IMR-90 (cell line): ENCODE measurements at regions of chr3 and their contacts with region 1.

Region 1: DNA sequence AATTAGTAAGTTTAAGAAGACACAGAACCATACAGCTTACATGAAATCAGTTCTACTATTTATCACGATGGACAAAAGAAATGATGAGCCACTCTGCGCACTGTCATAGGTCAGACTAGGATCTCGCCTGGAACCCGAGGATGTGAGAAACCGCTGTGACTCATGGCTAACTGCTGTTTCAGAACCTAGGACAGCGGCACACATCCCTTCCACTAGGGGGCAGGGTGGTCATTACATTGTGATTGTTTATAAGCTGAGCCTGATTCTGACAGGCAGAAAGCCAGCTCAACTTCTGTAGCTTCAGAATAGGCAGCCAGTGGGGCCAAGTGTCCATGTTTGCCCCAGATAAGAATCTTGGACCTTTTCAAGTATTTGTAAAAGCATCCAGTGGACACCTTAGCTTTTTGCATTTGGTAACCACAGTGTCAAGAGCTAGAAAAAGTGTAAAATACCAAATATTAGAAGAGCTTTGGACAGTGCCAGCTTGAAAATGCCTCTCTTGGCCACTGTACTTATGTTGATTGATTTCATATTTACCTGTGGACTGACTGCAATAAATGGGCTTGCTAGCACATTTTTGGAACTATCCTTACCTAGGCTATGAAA is 115.8 kb downstream of the KBTBD8 start:
- DNase-seq: peak; percentile 86
- ATAC-seq: peak; percentile 93
- H3K4me3 ChIP-seq: no peak overlapping the region
- H3K27ac ChIP-seq: no peak overlapping the region
- H3K4me1 ChIP-seq: no peaks in the 10 kb centered on the region; the same call in 1 of the 2 replicates
- H3K27me3 ChIP-seq: no peaks in the 10 kb centered on the region
- CTCF ChIP-seq: peak; percentile 99
- POLR2A ChIP-seq: no peak
- RAD21 ChIP-seq: peak; percentile 77

Region 2: DNA sequence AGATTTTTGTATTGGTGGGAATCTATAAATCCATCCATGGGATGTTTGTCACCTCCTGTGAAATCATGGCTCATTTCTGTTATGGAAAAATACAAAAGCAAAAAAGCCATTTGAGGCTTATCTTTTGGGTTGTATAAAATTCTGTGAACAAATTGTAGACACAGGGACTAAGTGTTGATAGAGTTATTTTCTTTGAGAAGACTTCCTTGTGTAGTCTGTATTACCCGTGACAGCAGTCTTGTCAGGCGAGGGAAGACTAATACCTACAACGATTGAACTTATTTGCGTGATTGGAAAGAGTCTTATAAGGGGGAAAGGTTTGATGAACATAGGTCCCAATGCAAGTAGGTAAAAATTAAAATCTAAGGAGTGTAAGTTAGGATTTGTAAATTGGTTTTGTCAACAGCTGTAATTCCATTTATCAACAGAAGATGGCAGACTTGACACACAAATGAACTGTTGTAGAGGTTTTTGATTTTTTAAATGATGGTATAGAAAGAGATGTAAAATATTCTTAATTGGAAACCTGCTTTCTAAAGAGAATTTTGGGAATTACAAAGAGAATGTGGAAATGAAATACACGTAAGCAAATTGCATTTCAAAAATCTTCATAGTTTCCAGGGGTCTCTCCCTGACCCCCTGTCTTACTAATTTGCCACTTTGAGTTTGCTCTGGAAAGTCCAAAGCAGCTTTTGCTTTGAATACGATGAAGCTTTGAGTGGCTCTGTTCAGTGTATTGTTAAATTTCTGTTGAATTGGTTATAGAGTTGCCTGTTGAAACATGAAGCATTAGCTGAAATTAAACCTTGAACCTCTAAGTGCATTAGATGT is 859.9 kb before region 1 on chr3:
- CTCF ChIA-PET with region 1: no interaction called
- POLR2A ChIA-PET with region 1: no interaction called
- dilution Hi-C with region 1: no loop called
- in situ Hi-C with region 1: no loop called
- intact Hi-C with region 1: loop called (anchors 5 kb)
- DNase-seq: peak; percentile 67
- ATAC-seq: peak; percentile 70
- H3K4me3 ChIP-seq: no peak overlapping the region
- H3K27ac ChIP-seq: no peak overlapping the region
- H3K4me1 ChIP-seq: peaks cover 12% of the 10 kb centered on the region
- H3K27me3 ChIP-seq: no peaks in the 10 kb centered on the region
- CTCF ChIP-seq: peak; percentile 75
- POLR2A ChIP-seq: no peak
- RAD21 ChIP-seq: peak; percentile 77

Region 3: GRCh38 chr3:66904831-66905493 is 208.9 kb before region 1 on chr3:
- CTCF ChIA-PET with region 1: no interaction called
- POLR2A ChIA-PET with region 1: no interaction called
- dilution Hi-C with region 1: no loop called
- in situ Hi-C with region 1: no loop called
- intact Hi-C with region 1: no loop called
- DNase-seq: peak; percentile 1
- ATAC-seq: no peak
- H3K4me3 ChIP-seq: no peak overlapping the region
- H3K27ac ChIP-seq: no peak overlapping the region
- H3K4me1 ChIP-seq: no peaks in the 10 kb centered on the region
- H3K27me3 ChIP-seq: peaks cover 4% of the 10 kb centered on the region
- CTCF ChIP-seq: no peak
- POLR2A ChIP-seq: no peak
- RAD21 ChIP-seq: no peak

Region 4: GRCh38 chr3:66971891-66972551 is 141.9 kb before region 1 on chr3:
- CTCF ChIA-PET with region 1: interaction called, 10 read pairs
- POLR2A ChIA-PET with region 1: no interaction called
- dilution Hi-C with region 1: no loop called
- in situ Hi-C with region 1: no loop called
- intact Hi-C with region 1: loop called (anchors 1 kb)
- DNase-seq: peak; percentile 70
- ATAC-seq: peak; percentile 99
- H3K4me3 ChIP-seq: peak overlapping the region; percentile 26
- H3K27ac ChIP-seq: no peak overlapping the region
- H3K4me1 ChIP-seq: no peaks in the 10 kb centered on the region
- H3K27me3 ChIP-seq: peaks cover 5% of the 10 kb centered on the region
- CTCF ChIP-seq: peak; percentile 87
- POLR2A ChIP-seq: peak; percentile 51; the same call in 1 of the 2 replicates
- RAD21 ChIP-seq: peak; percentile 95

Region 5: DNA sequence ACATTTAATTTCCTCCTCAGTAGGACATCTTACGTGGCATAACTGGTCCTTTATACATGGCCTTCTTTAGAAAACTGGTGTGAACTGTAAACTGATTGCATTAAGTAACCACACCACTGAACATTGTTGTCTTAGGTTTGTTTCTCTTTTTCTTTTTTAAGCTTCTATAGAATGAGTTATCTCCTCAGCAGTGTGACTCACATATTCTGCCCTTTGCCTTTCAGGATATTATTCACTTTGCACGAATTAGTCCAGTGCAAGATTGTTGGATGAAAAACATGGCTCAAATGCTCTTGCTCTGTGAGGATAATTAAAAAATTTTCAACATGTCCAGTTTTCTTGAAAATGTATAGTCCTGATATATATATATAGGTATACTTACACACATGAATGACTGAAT is 31.8 kb after region 1 on chr3:
- CTCF ChIA-PET with region 1: no interaction called
- POLR2A ChIA-PET with region 1: no interaction called
- dilution Hi-C with region 1: no loop called
- in situ Hi-C with region 1: no loop called
- intact Hi-C with region 1: no loop called
- DNase-seq: peak; percentile 2
- ATAC-seq: no peak
- H3K4me3 ChIP-seq: no peak overlapping the region
- H3K27ac ChIP-seq: no peak overlapping the region
- H3K4me1 ChIP-seq: no peaks in the 10 kb centered on the region
- H3K27me3 ChIP-seq: no peaks in the 10 kb centered on the region
- CTCF ChIP-seq: no peak
- POLR2A ChIP-seq: no peak
- RAD21 ChIP-seq: no peak

Region 6: DNA sequence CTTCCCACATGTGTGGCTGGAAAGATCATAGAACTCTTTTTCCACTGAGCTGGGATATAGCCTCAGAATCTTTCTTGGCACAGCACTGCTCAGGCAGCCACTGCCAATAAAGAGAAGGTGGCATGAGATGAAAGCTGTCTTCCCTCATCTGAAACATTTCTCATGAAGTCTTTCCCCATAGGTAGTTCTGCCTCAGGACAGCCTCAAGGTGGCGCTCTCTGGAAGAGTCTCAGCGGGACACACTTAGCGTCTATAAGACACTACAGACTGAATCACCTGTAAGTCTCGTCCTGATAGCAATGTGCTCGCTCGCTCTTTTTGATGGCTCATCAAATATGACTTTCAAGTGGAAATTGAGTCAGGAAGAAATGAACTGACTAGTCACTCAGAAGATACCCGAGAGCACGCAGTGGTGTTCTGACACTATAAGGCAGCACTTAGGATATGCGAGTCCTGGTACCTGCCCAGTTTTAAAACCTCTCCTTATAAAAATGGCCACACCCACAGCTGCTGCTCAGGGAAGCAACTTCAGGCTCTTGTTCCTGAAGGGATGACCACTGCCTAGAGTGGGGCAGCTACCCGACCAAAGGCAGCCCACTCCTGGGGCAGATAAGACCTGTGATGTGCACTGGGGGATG is 271.0 kb after region 1 on chr3:
- CTCF ChIA-PET with region 1: no interaction called
- POLR2A ChIA-PET with region 1: no interaction called
- dilution Hi-C with region 1: no loop called
- in situ Hi-C with region 1: no loop called
- intact Hi-C with region 1: loop called (anchors 5 kb)
- DNase-seq: peak; percentile 50
- ATAC-seq: peak; percentile 54
- H3K4me3 ChIP-seq: no peak overlapping the region
- H3K27ac ChIP-seq: no peak overlapping the region
- H3K4me1 ChIP-seq: peaks cover 4% of the 10 kb centered on the region; the same call in 1 of the 2 replicates
- H3K27me3 ChIP-seq: no peaks in the 10 kb centered on the region
- CTCF ChIP-seq: peak; percentile 60
- POLR2A ChIP-seq: no peak
- RAD21 ChIP-seq: peak; percentile 68

Region 7: GRCh38 chr3:67790043-67790442 is 676.1 kb after region 1 on chr3:
- CTCF ChIA-PET with region 1: interaction called, 10 read pairs
- POLR2A ChIA-PET with region 1: no interaction called
- dilution Hi-C with region 1: no loop called
- in situ Hi-C with region 1: loop called (anchors 5 kb)
- intact Hi-C with region 1: loop called (anchors 1 kb)
- DNase-seq: peak; percentile 52
- ATAC-seq: peak; percentile 92
- H3K4me3 ChIP-seq: no peak overlapping the region
- H3K27ac ChIP-seq: no peak overlapping the region
- H3K4me1 ChIP-seq: no peaks in the 10 kb centered on the region
- H3K27me3 ChIP-seq: no peaks in the 10 kb centered on the region; the same call in 1 of the 2 replicates
- CTCF ChIP-seq: peak; percentile 83
- POLR2A ChIP-seq: no peak
- RAD21 ChIP-seq: peak; percentile 94

Region 8: DNA sequence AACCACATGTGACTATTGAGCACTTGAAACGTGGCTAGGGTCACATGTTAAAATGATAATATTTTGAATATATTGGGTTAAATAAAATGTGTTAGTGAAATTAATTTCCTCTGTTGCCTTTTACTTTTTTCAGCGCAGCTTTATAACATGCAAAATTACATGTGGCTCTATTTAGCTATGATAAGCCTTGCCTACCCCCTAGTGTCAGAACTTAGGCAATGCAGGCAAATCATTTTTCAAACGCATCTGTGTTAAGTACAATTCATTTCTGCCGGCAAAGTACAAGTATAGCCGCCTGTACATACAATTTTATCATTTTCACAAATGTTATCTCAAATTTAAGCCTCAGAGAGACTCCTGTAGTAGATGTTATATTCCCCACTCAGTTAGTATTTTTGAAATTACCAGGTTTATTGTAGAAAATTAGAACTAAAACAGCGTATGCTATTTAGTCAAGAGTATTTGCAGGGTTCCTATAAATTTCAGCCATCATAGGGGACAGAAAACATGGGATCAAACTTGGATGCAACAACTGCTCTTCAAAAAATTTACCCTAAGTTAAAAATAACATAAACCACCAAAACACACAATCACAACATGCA is 1762.3 kb after region 1 on chr3:
- CTCF ChIA-PET with region 1: interaction called, 23 read pairs
- POLR2A ChIA-PET with region 1: no interaction called
- dilution Hi-C with region 1: no loop called
- in situ Hi-C with region 1: loop called (anchors 5 kb)
- intact Hi-C with region 1: loop called (anchors 1 kb)
- DNase-seq: peak; percentile 74
- ATAC-seq: peak; percentile 96
- H3K4me3 ChIP-seq: no peak overlapping the region
- H3K27ac ChIP-seq: no peak overlapping the region
- H3K4me1 ChIP-seq: no peaks in the 10 kb centered on the region
- H3K27me3 ChIP-seq: peaks cover 3% of the 10 kb centered on the region; the same call in 1 of the 2 replicates
- CTCF ChIP-seq: peak; percentile 92
- POLR2A ChIP-seq: no peak
- RAD21 ChIP-seq: peak; percentile 86